ENCODE measurements at regions of chr10 and their contacts with region 1.

Region 1: DNA sequence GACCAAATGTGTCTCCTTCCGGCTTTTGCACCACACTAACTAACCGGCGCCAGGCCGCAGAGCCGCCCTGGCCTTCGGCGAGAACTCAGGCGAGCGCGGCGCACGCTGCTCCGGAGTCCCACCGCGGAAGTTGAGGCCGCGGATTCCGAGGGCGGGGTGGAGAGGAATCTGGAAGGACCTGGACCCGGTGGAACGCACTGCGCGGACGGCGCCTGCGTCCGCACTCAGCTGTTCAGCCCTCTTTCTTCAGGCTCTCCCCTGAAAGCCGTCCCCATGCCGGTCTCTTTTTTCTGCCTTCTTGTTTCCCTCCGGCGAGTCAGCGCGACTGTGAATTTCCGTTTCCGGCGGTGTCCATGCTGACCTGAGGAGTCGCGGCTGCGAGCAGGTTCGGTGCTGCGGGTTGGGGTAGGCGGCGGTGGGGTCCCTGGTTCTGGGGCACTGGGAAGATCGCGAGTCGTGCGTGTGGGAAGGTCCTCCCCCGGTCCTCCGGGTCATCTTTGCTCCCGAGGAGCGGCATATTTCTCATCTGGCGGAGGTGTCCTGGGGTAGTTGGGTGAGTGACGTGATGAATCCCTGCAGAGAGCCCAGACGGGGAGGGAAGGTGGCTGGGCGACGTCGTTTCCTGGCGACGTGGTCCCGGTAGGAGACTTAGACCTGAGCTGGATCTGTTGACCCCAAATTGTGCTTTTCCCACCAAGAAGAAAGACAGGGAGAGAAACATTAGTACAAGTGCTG is at the start of gene BMS1:
- DNase-seq: peak; percentile 94
- ATAC-seq: peak; percentile 87
- H3K4me3 Mint-ChIP-seq: peak within 1 kb of the TSS; percentile 90
- H3K27ac Mint-ChIP-seq: peak within 1 kb of the TSS; percentile 93
- H3K4me1 Mint-ChIP-seq: peaks cover 30% of the 10 kb centered on the region
- H3K27me3 Mint-ChIP-seq: no peaks in the 10 kb centered on the region
- total RNA-seq, gene BMS1: 26.5 to 30.4 TPM

Region 2: GRCh38 chr10:42552493-42553407 is 229.9 kb before region 1 on chr10:
- CTCF ChIA-PET with region 1: no interaction called
- POLR2A ChIA-PET with region 1: no interaction called
- intact Hi-C with region 1: loop called (anchors 1 kb)
- DNase-seq: peak; percentile 97
- ATAC-seq: peak; percentile 97
- H3K4me3 Mint-ChIP-seq: peak overlapping the region; percentile 94
- H3K27ac Mint-ChIP-seq: peak overlapping the region; percentile 94
- H3K4me1 Mint-ChIP-seq: peaks cover 33% of the 10 kb centered on the region
- H3K27me3 Mint-ChIP-seq: no peaks in the 10 kb centered on the region

Region 3: DNA sequence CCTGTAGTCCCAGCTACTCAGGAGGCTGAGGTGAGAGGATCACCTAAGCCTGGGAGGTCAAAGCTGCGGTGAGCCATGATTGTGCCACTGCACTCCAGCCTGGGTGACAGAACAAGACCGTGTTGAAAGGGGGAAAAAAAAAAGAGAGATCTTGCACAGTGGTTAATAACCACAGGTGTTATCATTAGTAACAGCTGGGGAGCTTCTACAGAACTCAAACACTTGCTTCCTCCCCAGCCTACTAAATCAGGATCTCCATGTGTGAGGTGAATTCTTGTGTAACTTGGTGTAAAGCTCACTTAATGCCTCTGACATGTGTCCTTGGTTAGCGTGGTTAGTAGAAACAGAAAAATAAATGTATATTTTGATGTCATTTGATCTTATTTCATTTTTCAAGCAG is 43.9 kb before region 1 on chr10:
- CTCF ChIA-PET with region 1: no interaction called
- POLR2A ChIA-PET with region 1: no interaction called
- intact Hi-C with region 1: no loop called
- DNase-seq: no peak
- ATAC-seq: no peak
- H3K4me3 Mint-ChIP-seq: no peak overlapping the region
- H3K27ac Mint-ChIP-seq: no peak overlapping the region
- H3K4me1 Mint-ChIP-seq: no peaks in the 10 kb centered on the region
- H3K27me3 Mint-ChIP-seq: peaks cover 21% of the 10 kb centered on the region

Region 4: GRCh38 chr10:42753126-42753506 is 29.5 kb before region 1 on chr10:
- CTCF ChIA-PET with region 1: interaction called, 4 read pairs
- POLR2A ChIA-PET with region 1: interaction called, 3 read pairs
- intact Hi-C with region 1: loop called in 1 of 2 experiments (anchors 1 kb)
- DNase-seq: peak; percentile 87
- ATAC-seq: peak; percentile 88
- H3K4me3 Mint-ChIP-seq: peak overlapping the region; percentile 59
- H3K27ac Mint-ChIP-seq: no peak overlapping the region
- H3K4me1 Mint-ChIP-seq: peaks cover 5% of the 10 kb centered on the region
- H3K27me3 Mint-ChIP-seq: peaks cover 45% of the 10 kb centered on the region

Region 5: GRCh38 chr10:43105102-43105785 is 322.6 kb after region 1 on chr10:
- CTCF ChIA-PET with region 1: no interaction called
- POLR2A ChIA-PET with region 1: no interaction called
- intact Hi-C with region 1: loop called in 1 of 2 experiments (anchors 1 kb)
- DNase-seq: peak; percentile 88
- ATAC-seq: peak; percentile 95
- H3K4me3 Mint-ChIP-seq: peak overlapping the region; percentile 46
- H3K27ac Mint-ChIP-seq: no peak overlapping the region
- H3K4me1 Mint-ChIP-seq: peaks cover 4% of the 10 kb centered on the region
- H3K27me3 Mint-ChIP-seq: peaks cover 19% of the 10 kb centered on the region

Region 6: GRCh38 chr10:43396928-43397624 is 614.5 kb after region 1 on chr10:
- CTCF ChIA-PET with region 1: no interaction called
- POLR2A ChIA-PET with region 1: no interaction called
- intact Hi-C with region 1: loop called in 1 of 2 experiments (anchors 2 kb)
- DNase-seq: peak; percentile 93
- ATAC-seq: peak; percentile 72
- H3K4me3 Mint-ChIP-seq: peak overlapping the region; percentile 99
- H3K27ac Mint-ChIP-seq: peak overlapping the region; percentile 96
- H3K4me1 Mint-ChIP-seq: peaks cover 63% of the 10 kb centered on the region
- H3K27me3 Mint-ChIP-seq: no peaks in the 10 kb centered on the region